Activated naive CD4-positive, alpha-beta T cell treated with anti-CD3 and anti-CD28 coated beads for 36 hours (primary cell): ENCODE measurements at regions of chr7 and their contacts with region 1.

Region 1: DNA sequence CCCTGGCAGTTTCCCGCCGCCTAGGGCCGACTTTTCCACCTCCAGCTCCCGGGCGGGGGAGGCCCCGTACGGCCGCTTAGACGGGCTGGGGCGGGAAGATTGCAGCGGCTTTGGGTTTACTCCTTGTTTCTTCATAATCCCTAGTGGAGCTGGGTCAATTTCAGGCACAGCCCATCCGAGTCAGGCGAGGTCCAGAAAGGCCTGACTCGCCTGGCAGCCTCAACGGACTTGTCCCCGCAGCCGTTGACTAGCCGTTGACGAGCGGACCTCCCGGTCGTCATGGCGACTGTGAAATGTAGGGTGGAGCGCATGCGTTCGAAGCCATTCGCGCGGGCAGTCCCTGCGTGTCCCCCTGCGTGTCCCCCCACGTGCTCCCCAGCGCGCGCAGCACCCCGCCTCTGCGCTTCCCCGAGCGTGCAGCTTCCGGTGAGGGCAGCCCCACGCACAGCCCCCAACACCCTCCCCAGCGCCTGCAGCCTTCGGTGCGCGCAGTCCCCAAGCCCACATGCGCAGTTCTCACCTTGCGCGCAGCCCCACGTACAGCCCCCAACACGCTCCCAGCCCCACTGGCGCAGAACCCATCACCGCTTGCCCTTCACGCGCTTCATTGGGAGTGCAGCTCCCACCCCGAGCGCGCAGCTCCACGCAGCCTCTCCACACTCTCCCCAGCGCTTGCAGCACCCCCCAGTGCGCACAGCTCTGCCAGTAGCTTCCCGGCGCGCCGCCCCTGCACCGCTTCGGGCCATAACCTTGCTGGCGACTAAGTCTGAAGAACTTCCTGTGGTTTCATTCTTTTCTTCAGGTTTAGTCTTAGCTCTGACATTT is 67.8 kb downstream of the TBX20 start:
- DNase-seq: peak; percentile 12
- H3K4me3 Mint-ChIP-seq: peak overlapping the region; percentile 71
- H3K27ac Mint-ChIP-seq: no peak overlapping the region
- H3K4me1 Mint-ChIP-seq: peaks cover 10% of the 10 kb centered on the region
- H3K27me3 Mint-ChIP-seq: peaks cover 25% of the 10 kb centered on the region

Region 2: DNA sequence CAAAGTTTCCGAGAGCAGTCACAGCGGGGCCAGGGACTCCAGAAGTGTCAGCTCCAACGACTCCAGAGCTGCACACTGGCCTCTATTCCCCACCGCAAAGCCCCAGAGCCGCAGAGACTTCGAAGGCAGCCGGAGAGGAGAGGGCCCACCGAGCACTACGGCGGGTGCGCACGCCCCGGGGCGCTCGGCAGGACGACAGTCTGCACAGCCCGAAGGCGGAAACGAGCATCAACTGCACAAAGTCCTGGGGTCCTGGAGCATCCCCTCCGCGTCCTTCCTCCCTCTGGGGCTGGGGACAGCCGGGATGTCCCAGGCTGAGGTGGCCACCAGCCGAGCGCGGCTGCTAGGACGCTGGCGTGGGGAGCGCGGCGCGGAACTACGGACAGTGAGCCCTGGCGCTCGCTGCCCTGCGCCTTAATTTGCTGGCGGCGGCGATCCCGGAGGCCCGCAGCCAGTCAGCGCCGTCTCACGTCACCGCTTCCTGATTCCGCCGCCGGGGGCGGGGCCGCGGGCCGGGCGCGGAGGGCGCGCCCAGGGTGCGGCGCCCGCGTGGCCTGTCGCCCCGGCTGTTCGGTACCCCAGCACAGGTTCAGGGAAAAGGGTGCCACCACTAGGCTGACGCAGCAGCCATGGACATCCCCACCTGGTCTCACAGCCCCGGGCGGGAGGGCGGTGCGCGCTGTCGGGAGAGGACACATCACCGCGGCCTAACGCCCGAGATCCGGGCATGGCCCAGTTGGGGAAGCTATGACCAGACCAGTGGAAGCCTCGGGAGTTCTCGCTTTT is 67.8 kb after region 1 on chr7 and contains the start of gene TBX20:
- CTCF ChIA-PET with region 1: no interaction called
- intact Hi-C with region 1: loop called (anchors 10 kb)
- DNase-seq: peak; percentile 31
- H3K4me3 Mint-ChIP-seq: peak within 1 kb of the TSS; percentile 60
- H3K27ac Mint-ChIP-seq: no peak within 1 kb of the TSS
- H3K4me1 Mint-ChIP-seq: peaks cover 25% of the 10 kb centered on the region
- H3K27me3 Mint-ChIP-seq: peaks cover 86% of the 10 kb centered on the region
- total RNA-seq, gene TBX20: not detected

Region 3: DNA sequence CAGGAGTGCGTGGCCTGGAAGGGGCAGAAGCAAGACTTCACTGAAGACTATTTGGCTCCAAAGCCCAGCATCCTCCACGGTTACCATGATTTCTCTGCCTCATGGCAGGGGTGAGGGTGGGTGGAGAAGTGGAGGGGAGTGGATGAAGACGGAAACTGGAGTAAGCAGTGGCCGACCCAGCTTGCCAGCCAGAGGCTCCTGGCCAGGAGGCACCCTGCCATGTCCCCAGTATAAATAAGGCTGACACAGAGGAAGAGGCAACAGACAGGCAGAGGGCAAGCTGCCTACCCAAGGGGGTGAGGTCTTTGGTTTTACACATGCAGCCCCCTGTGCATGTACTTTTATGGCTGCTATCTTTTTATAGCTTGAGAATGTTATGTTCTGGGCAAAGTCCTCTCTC is 170.4 kb after region 1 on chr7:
- CTCF ChIA-PET with region 1: no interaction called
- intact Hi-C with region 1: no loop called
- DNase-seq: no peak
- H3K4me3 Mint-ChIP-seq: no peak overlapping the region
- H3K27ac Mint-ChIP-seq: no peak overlapping the region
- H3K4me1 Mint-ChIP-seq: no peaks in the 10 kb centered on the region
- H3K27me3 Mint-ChIP-seq: peaks cover 9% of the 10 kb centered on the region

Region 4: DNA sequence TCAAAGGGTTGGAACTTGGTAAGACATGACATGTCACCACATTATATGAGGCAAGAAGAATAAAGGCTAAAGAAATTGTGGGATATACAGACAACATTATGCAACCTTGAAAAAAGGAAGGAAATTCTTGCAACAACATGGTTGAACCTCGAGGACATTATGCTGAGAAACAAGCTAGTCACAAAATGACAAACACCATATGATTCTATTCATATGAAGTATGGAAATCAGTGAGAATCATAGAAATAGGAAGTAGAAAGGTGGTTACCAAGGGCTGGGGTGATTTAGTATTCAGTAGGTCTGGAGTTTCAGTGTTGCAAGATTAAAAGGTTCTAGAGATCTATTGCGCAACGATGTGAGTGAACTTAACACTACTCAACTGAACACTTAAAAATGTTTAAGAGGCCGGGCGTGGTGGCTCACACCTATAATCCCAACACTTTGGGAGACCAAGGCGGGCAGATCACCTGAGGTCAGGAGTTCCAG is 194.7 kb after region 1 on chr7:
- CTCF ChIA-PET with region 1: no interaction called
- intact Hi-C with region 1: no loop called
- DNase-seq: no peak
- H3K4me3 Mint-ChIP-seq: no peak overlapping the region
- H3K27ac Mint-ChIP-seq: no peak overlapping the region
- H3K4me1 Mint-ChIP-seq: no peaks in the 10 kb centered on the region
- H3K27me3 Mint-ChIP-seq: peaks cover 12% of the 10 kb centered on the region

Region 5: GRCh38 chr7:35424869-35425495 is 238.9 kb after region 1 on chr7:
- CTCF ChIA-PET with region 1: no interaction called
- intact Hi-C with region 1: loop called (anchors 5 kb)
- DNase-seq: peak; percentile 69
- H3K4me3 Mint-ChIP-seq: no peak overlapping the region
- H3K27ac Mint-ChIP-seq: no peak overlapping the region
- H3K4me1 Mint-ChIP-seq: no peaks in the 10 kb centered on the region
- H3K27me3 Mint-ChIP-seq: peaks cover 17% of the 10 kb centered on the region

Region 6: GRCh38 chr7:35519971-35520809 is 334.1 kb after region 1 on chr7:
- CTCF ChIA-PET with region 1: interaction called, 4 read pairs
- intact Hi-C with region 1: loop called (anchors 5 kb)
- DNase-seq: peak; percentile 73
- H3K4me3 Mint-ChIP-seq: no peak overlapping the region
- H3K27ac Mint-ChIP-seq: no peak overlapping the region
- H3K4me1 Mint-ChIP-seq: no peaks in the 10 kb centered on the region
- H3K27me3 Mint-ChIP-seq: peaks cover 4% of the 10 kb centered on the region

Region 7: GRCh38 chr7:35866186-35866585 is 680.1 kb after region 1 on chr7:
- CTCF ChIA-PET with region 1: no interaction called
- intact Hi-C with region 1: no loop called
- DNase-seq: no peak
- H3K4me3 Mint-ChIP-seq: no peak overlapping the region
- H3K27ac Mint-ChIP-seq: no peak overlapping the region
- H3K4me1 Mint-ChIP-seq: peaks cover 28% of the 10 kb centered on the region
- H3K27me3 Mint-ChIP-seq: no peaks in the 10 kb centered on the region